ENCODE measurements at regions of chr22 and their contacts with region 1.

Region 1: GRCh38 chr22:23225724-23226496 is 45.6 kb downstream of the BCR start:
- DNase-seq: peak in 3 of 4 experiments; percentile 59 to 72 (median 59)
- ATAC-seq: no peak
- H3K4me3 ChIP-seq: no peak overlapping the region
- H3K27ac ChIP-seq: no peak overlapping the region
- H3K4me1 ChIP-seq: peaks cover 48 to 50% of the 10 kb centered on the region in 2 experiments
- H3K27me3 ChIP-seq: no peaks in the 10 kb centered on the region
- CTCF ChIP-seq: no peak
- EP300 ChIP-seq: no peak
- POLR2A ChIP-seq: no peak
- RAD21 ChIP-seq: no peak

Region 2: DNA sequence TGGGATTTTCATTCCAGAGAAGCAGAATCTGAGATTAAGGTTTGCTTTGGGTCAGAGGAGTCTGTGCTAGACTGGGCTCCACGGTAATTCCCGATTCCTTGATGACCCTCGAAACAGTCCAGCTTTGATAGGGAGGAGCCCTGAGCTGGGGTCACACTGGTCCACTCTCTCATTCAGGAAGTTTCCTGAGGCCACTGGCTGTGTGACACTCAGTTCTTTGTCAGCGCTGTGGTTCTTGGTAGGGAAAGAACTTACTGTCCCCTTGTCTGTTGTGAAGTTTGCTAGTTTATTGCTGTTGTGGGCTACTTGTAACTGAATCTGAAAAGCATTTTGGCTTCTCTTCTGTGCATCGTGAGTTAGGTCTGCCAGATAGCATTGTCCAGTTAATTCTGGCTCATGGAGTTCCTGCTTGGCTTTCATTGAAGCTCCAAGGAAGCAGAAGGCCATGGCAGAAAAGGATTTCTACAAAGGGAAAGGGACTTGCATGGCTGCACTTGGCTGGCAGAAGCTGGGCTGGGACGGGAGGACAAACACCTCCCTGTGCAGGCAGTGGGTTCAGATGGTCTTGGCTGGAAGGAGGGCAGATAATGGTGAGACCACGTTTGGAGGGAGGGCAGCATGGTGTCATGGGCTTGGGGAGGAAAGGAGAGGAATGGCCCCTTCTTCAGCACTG is 22.3 kb before region 1 on chr22:
- CTCF ChIA-PET with region 1: no interaction called
- POLR2A ChIA-PET with region 1: interaction called, 3,476 read pairs
- in situ Hi-C with region 1: no loop called
- intact Hi-C with region 1: loop called (anchors 2 kb)
- DNase-seq: peak in 1 of 4 experiments; percentile 64
- ATAC-seq: no peak
- H3K4me3 ChIP-seq: no peak overlapping the region
- H3K27ac ChIP-seq: no peak overlapping the region; the same call in 2 of the 3 replicates
- H3K4me1 ChIP-seq: peaks cover 0 to 9% of the 10 kb centered on the region in 2 experiments; a peak in 2 of 5 replicates
- H3K27me3 ChIP-seq: no peaks in the 10 kb centered on the region; a peak in 1 of 5 replicates
- CTCF ChIP-seq: no peak
- EP300 ChIP-seq: no peak
- POLR2A ChIP-seq: no peak
- RAD21 ChIP-seq: no peak

Region 3: GRCh38 chr22:23263651-23264555 is 38.0 kb after region 1 on chr22:
- CTCF ChIA-PET with region 1: no interaction called
- POLR2A ChIA-PET with region 1: interaction called, 13 read pairs
- in situ Hi-C with region 1: no loop called
- intact Hi-C with region 1: no loop called
- DNase-seq: peak in 2 of 4 experiments; percentile 58 to 60
- ATAC-seq: peak; percentile 7
- H3K4me3 ChIP-seq: no peak overlapping the region
- H3K27ac ChIP-seq: no peak overlapping the region
- H3K4me1 ChIP-seq: peaks cover 0 to 35% of the 10 kb centered on the region in 2 experiments; a peak in 1 of 5 replicates
- H3K27me3 ChIP-seq: no peaks in the 10 kb centered on the region
- CTCF ChIP-seq: no peak; a peak in 1 of 6 replicates
- EP300 ChIP-seq: no peak
- POLR2A ChIP-seq: no peak
- RAD21 ChIP-seq: no peak

Measured in K562 (cell line).